Sigmoid colon (tissue), 7 donors: ENCODE measurements at regions of chr14 and their contacts with region 1.

Region 1: GRCh38 chr14:101839236-101839635 is 77.7 kb downstream of the PPP2R5C start:
- DNase-seq: no peak
- H3K4me3 ChIP-seq: no peak overlapping the region
- H3K27ac ChIP-seq: peak overlapping the region in 2 of 4 donors; percentile 75 to 86
- H3K4me1 ChIP-seq: peaks cover 0 to 76% (median 66%) of the 10 kb centered on the region in 4 donors
- H3K27me3 ChIP-seq: no peaks in the 10 kb centered on the region
- CTCF ChIP-seq: no peak
- EP300 ChIP-seq: no peak
- POLR2A ChIP-seq: no peak

Region 2: DNA sequence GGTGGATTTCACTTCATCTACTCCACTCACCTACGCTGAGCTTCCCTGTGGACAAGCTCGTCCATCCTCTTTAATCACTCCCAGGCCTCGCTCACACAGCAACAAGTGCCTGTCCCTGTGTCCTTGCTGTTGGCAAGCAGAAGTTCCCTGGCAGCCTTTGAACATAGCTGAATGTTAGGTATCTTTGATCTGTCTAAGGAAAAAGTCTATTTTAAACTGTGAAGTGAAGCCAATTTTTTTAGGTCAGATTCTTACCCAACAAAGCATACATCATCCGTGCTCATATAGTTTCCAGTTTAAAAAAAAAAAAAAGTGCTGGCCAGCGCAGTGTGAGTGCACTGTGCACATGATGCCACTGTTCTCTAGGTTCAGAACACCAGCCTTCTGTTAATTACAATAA is 41.4 kb before region 1 on chr14:
- intact Hi-C with region 1: loop called (anchors 5 kb)
- DNase-seq: no peak
- H3K4me3 ChIP-seq: no peak overlapping the region
- H3K27ac ChIP-seq: peak overlapping the region; percentile 77 to 86 (median 83)
- H3K4me1 ChIP-seq: peaks cover 0 to 41% (median 22%) of the 10 kb centered on the region in 4 donors
- H3K27me3 ChIP-seq: no peaks in the 10 kb centered on the region
- CTCF ChIP-seq: no peak
- EP300 ChIP-seq: peak in 2 of 4 donors; percentile 17 to 53
- POLR2A ChIP-seq: no peak

Region 3: DNA sequence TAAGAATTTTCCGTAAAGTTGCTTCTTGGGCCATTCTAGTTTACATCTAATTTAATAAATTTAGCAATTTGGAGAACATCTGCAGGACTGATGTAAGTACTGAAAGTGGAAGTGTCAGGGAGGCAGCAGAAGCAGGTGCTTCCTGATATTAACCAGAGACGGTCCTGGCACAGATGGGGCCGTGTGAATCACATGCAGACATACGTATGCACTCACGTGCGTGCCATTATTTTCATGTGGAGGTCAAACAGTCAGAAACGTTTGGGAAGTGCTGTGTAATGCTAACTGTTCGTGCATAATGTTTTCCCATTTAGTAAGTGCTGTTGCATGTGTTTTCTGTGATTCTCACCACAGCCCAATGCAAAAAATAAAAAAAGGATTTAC is 37.3 kb after region 1 on chr14:
- intact Hi-C with region 1: loop called (anchors 5 kb)
- DNase-seq: peak; percentile 95
- H3K4me3 ChIP-seq: peak overlapping the region in 1 of 4 donors; percentile 3
- H3K27ac ChIP-seq: peak overlapping the region; percentile 15 to 85 (median 76)
- H3K4me1 ChIP-seq: peaks cover 0 to 77% (median 58%) of the 10 kb centered on the region in 4 donors
- H3K27me3 ChIP-seq: no peaks in the 10 kb centered on the region
- CTCF ChIP-seq: no peak
- EP300 ChIP-seq: peak; percentile 97 to 100 (median 98)
- POLR2A ChIP-seq: no peak